Esophagus muscularis mucosa (tissue), 4 donors: ENCODE measurements at regions of chr1 and their contacts with region 1.

Region 1: DNA sequence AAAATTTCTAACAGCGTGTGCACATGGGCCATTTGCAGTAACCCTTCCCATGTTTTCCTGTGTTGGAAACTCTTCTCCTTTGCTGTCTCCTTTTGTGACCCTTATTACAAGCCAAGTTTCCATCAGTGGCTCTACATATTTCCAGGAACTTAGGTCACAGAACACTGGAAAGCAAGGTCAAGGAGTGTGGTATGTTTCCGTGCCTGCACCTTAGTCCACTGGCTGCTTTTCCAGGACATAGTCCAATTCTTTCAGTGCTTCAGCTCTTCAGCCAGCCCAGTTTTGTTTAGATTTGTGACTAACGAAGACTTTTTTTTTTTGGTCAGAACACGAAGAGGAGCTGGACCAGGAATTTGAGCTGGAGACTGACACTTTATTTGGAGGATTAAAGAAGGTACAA is 33.8 kb downstream of the HHAT start:
- DNase-seq: no peak
- H3K4me3 ChIP-seq: no peak overlapping the region
- H3K27ac ChIP-seq: peak overlapping the region; percentile 12 to 64 (median 35)
- H3K4me1 ChIP-seq: peaks cover 16 to 26% (median 24%) of the 10 kb centered on the region in 4 donors
- H3K27me3 ChIP-seq: no peaks in the 10 kb centered on the region
- CTCF ChIP-seq: no peak
- EP300 ChIP-seq: peak; percentile 21
- POLR2A ChIP-seq: no peak

Region 2: GRCh38 chr1:210400043-210400840 is 37.7 kb after region 1 on chr1:
- intact Hi-C with region 1: loop called (anchors 2 kb)
- DNase-seq: peak; percentile 80
- H3K4me3 ChIP-seq: no peak overlapping the region
- H3K27ac ChIP-seq: no peak overlapping the region
- H3K4me1 ChIP-seq: no peaks in the 10 kb centered on the region
- H3K27me3 ChIP-seq: no peaks in the 10 kb centered on the region
- CTCF ChIP-seq: peak; percentile 61 to 86 (median 70)
- EP300 ChIP-seq: no peak
- POLR2A ChIP-seq: no peak

Region 3: DNA sequence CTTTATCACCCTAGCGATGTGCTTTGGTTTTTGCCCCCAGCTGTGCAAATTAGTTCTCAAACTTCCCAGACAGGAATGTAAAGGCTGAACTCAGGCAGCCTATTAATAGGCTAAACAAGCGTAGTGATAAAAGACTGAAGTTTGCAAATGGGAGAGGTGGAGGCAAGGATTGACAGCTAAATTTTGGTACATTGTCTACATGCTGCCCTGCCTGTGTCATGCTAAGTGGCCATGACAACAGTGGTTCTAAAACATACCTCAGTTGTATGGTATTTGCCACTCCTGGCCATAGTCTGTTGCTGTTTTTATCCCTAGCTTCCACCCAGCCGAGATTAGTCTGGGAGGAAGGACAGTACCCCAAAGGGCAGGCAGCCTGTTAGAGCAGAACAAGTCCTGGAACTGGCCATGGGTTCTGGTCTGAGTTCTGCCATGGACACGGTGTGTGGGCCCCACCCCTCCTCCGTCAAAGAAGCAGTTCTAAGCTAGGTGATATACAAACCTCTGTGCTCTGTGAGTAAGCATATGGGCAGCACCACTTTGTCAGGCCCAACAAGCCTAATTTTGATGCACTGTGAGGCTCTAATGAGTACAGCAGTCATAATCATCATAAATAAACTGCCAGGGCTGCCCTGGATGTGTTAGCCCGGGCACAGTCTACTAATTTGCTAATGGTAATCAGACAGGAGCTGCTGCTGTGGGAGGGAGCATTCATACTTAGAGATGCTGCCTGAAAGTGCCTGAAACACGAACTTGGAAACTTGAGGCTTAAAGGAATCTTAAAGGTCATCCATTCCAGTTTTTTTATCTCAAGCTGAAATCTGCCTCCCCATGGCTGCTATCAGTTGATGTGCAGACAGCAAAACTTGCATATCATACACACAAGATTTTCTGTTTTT is 143.3 kb after region 1 on chr1:
- intact Hi-C with region 1: no loop called
- DNase-seq: no peak
- H3K4me3 ChIP-seq: no peak overlapping the region
- H3K27ac ChIP-seq: no peak overlapping the region
- H3K4me1 ChIP-seq: no peaks in the 10 kb centered on the region
- H3K27me3 ChIP-seq: no peaks in the 10 kb centered on the region
- CTCF ChIP-seq: no peak
- EP300 ChIP-seq: no peak
- POLR2A ChIP-seq: no peak